ENCODE measurements at regions of chr15 and their contacts with region 1.

Region 1: DNA sequence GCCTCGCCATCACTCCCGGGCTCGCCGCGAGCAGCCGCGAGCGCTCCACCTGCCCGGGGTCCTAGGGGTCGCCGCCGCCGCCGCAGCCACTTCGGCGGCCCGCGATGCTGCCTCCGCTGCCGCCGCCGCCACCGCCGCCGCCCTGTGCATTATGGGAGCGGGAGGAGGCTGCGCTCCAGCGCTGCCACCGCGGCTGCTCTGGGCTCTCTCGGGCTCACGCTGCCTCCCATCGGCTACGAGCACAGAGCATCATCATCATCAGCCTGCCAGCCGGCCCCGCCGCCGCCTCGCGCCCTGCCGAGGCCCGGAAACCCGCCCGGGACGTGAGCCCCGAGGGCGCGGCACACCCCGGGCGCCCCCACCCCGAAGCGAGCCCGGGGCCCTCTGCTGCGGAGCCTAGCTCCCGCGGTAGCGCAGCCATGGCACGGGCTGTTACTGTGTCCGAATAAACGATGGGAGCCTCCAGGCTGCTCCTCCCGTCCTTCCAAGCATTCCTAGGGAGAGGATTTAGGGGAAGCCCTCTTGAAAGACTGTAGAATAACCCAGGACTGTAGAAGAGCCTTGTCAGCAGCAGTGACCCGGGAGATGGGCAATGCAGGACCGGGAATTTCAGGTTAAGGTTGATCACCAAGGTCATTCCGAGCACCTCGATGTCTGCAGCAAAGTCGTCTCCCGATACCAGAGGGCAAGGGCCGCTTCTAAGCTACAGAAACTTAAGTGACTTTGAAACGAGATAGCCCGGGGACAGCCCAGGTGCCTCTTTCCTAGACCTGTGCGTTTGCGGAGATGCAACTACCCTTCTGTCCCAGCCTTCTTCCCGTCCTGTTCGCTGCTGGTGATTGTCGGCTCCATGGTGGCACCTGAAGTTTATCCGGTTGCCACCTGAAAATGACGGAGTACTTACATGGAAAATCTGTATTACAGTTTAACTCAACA is 579 bp upstream of the MYO5A start:
- DNase-seq: peak; percentile 68 to 88 (median 82)
- H3K4me3 ChIP-seq: peak overlapping the region; percentile 65 to 98 (median 87)
- H3K27ac ChIP-seq: peak overlapping the region; percentile 78 to 98 (median 94)
- H3K27me3 ChIP-seq: no peaks in the 10 kb centered on the region
- CTCF ChIP-seq: peak in 49 of 56 donors; percentile 17 to 64 (median 45)

Region 2: DNA sequence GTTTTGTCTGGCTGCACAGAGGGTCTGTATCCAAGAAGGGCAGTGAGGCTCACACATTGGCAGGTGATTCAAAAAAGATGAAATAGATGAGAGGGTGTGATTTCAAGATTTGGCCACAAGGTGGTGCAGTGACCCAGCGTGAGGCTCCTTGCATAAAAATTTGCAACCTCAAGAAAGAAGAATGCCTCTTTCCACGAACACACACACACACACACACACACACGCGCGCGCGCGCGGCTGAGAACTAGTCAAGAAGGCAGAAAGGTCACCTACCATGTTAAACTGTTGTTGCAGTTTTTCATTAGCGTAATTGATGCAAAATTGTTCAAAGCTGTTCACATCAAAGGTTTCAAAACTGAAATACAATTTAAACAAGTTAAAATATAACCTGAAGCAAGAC is 272.9 kb before region 1 on chr15:
- intact Hi-C with region 1: loop called (anchors 2 to 10 kb)
- DNase-seq: peak in 7 of 10 donors; percentile 51 to 81 (median 70)
- H3K4me3 ChIP-seq: peak overlapping the region in 24 of 59 donors; percentile 4 to 50 (median 31)
- H3K27ac ChIP-seq: peak overlapping the region in 38 of 59 donors; percentile 6 to 86 (median 51)
- H3K27me3 ChIP-seq: no peaks in the 10 kb centered on the region
- CTCF ChIP-seq: peak; percentile 69 to 94 (median 83)

Region 3: DNA sequence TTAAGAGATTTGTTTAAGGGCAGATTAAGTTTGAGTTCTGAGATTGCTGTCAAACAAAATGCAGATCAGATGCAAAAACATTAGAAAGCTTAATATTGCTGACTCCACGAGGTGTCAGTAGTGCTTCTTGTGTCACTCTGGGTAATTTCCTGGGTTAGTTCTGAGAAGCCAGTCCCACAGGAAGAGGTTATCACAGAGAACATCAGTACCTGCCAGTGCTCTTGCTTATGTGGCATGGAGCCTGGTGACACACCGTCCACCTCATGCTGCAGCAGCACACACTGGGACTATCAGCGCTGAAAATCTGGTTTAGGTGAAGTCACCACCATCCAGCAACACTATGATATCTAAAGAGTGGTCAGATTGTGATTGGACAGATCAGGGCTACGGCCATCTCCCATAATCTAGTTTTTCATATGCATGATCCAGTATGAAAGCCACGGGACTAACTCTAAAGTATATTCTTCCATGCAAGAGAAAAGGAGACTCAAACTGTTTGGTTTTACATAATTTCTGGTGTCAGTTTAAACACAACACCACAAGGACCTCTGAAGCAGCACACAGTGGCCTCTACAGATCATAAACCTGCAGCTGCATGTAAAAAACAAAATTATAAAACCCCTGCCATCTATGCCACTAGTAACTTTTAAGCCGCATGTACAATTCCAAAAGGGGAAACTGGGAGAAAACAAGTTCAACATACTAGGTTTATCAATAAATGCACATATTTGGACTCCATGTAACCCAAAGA is 197.6 kb before region 1 on chr15:
- intact Hi-C with region 1: loop called (anchors 2 to 10 kb)
- DNase-seq: peak in 1 of 10 donors; percentile 41
- H3K4me3 ChIP-seq: no peak overlapping the region
- H3K27ac ChIP-seq: peak overlapping the region in 46 of 59 donors; percentile 0 to 71 (median 40)
- H3K27me3 ChIP-seq: no peaks in the 10 kb centered on the region
- CTCF ChIP-seq: peak in 54 of 56 donors; percentile 14 to 80 (median 52)

Region 4: GRCh38 chr15:52362502-52362901 is 166.8 kb before region 1 on chr15:
- intact Hi-C with region 1: loop called in 1 of 2 experiments (anchors 5 kb)
- DNase-seq: no peak
- H3K4me3 ChIP-seq: no peak overlapping the region
- H3K27ac ChIP-seq: peak overlapping the region in 50 of 59 donors; percentile 1 to 82 (median 66)
- H3K27me3 ChIP-seq: no peaks in the 10 kb centered on the region
- CTCF ChIP-seq: no peak

Region 5: GRCh38 chr15:52486003-52486996 is 43.0 kb before region 1 on chr15:
- intact Hi-C with region 1: loop called in 1 of 2 experiments (anchors 5 kb)
- DNase-seq: peak in 1 of 10 donors; percentile 25
- H3K4me3 ChIP-seq: peak overlapping the region in 47 of 59 donors; percentile 0 to 54 (median 27)
- H3K27ac ChIP-seq: peak overlapping the region in 53 of 59 donors; percentile 1 to 83 (median 55)
- H3K27me3 ChIP-seq: no peaks in the 10 kb centered on the region
- CTCF ChIP-seq: no peak

Region 6: DNA sequence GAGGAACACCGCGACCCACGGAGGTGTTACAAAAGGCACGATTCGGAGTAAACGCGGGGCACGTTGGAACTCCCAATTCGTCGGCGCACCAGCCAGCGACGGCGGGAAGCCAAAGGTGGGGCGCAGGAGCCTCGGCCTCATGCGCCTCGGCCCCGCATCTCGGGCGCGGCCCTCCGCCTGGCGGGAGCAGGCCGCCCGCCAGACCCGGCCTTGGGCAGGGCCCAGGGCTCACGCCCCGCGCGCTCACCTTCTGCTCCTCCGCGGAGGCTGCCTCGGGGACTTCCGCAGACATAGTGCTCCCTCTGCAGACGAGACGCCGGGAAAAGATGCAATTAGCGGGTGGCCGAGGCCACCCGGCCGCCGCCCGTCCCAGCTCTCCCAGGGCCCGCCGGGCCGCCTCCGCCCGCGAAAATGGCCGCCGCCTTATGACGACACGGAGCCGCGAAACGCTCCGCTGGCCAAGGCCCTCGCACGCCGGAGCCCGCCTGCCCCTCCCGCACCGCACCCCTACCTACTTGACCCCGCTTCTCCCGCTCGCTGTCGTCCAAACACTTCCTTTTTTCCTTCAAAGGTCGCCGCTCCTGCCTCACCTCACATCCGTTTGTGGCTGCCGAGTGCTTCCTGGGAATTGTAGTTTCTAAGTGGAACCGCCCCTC is 39.5 kb after region 1 on chr15 and contains the start of gene ARPP19:
- intact Hi-C with region 1: loop called (anchors 5 kb)
- DNase-seq: peak; percentile 69 to 93 (median 92)
- H3K4me3 ChIP-seq: peak within 1 kb of the TSS; percentile 58 to 98 (median 87)
- H3K27ac ChIP-seq: peak within 1 kb of the TSS; percentile 63 to 96 (median 91)
- H3K27me3 ChIP-seq: no peaks in the 10 kb centered on the region
- CTCF ChIP-seq: peak in 48 of 56 donors; percentile 2 to 68 (median 36)
- total RNA-seq, gene ARPP19: 228 to 624 (median 390) TPM

Region 7: DNA sequence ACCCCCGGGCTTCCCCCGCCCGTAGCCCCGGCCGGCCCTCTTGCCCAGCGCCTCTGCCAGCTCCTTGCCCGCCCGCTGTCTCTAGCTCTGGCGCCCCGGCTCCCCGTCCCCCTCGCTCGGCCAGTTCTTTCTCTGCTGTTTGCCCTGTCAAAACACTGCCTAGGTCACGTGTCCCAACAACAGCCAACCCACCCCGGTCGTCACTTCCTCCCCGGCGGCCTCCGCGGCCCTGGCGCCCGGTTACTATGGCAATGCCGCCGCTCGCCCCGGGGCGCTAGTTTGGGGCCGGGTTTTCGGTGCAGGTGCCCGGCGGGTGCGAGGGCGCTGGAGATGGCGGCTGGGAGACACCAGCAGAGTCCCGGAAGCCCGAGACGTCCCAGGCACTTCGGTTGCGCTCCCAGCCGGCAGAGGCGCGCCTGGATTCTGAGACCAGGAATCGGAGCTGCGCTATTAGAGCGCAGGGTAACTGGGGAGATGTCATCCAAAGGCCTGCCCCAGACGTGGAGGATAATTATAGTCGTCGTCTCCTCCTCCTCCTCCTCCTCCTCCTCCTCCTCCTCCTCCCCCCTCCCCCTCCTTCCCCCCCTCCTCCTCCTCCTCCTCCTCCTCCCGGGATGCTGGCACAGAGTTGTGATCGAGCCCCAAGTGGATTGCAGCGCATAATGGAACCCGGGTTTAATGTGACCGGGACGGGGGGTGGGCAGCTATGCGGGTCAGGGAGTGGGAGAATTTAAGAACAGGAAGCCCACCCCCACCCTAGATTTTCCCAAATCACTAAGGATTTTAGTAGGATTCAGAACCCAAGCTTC is 150.2 kb after region 1 on chr15 and contains the start of gene ATOSA:
- intact Hi-C with region 1: loop called in 1 of 2 experiments (anchors 5 kb)
- DNase-seq: peak; percentile 92 to 98 (median 96)
- H3K4me3 ChIP-seq: peak within 1 kb of the TSS; percentile 62 to 99 (median 90)
- H3K27ac ChIP-seq: peak within 1 kb of the TSS; percentile 77 to 99 (median 96)
- H3K27me3 ChIP-seq: no peaks in the 10 kb centered on the region
- CTCF ChIP-seq: peak in 38 of 56 donors; percentile 3 to 53 (median 30)
- total RNA-seq, gene ATOSA: 34.8 to 88.4 (median 52.9) TPM

Region 8: GRCh38 chr15:52936489-52936888 is 407.2 kb after region 1 on chr15:
- intact Hi-C with region 1: no loop called
- DNase-seq: no peak
- H3K4me3 ChIP-seq: no peak overlapping the region
- H3K27ac ChIP-seq: no peak overlapping the region
- H3K27me3 ChIP-seq: peaks cover 0 to 13% (median 0%) of the 10 kb centered on the region in 45 donors
- CTCF ChIP-seq: no peak

Measured in dorsolateral prefrontal cortex (tissue), 120 donors.